GM12878 (cell line): ENCODE measurements at regions of chr19 and their contacts with region 1.

Region 1: DNA sequence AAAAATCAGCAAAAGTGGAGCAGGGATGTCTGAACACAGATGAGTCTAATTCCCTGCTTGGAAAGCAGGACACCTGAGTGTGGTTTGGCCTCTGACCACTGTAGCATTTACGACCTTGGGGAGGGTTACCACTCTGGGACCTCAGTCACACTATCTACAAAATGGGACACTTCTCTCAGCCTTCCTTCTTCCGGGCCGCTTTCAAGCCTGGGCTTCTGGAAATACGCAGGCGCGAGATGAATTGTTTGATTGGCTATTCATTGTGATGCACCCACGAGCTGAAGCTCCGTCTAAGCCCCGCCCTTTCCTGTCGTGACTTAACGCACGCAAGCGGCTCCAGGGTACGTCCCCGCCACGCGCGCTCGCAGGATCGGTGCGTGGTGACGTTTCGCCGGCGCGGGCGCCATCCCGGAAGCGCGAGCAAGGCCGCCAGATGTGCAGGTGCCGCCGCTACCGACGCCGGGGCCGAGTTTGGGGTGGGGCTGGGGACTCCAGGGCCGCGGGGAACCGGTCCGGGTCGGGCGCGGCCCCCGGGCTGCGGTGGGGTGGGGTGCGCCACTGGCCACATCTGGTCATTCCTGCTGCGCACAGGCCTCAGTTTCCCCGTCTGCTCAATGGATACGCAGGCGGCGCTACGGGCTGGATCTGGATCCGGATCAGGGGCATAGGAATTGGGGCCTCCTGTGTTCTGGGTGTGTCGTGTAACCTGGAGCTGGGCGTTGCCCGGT is at the start of gene KXD1:
- DNase-seq: peak; percentile 98
- ATAC-seq: peak; percentile 97
- H3K4me3 ChIP-seq: peak within 1 kb of the TSS; percentile 95
- H3K27ac ChIP-seq: peak within 1 kb of the TSS; percentile 85
- H3K4me1 ChIP-seq: no peaks in the 10 kb centered on the region
- H3K27me3 ChIP-seq: no peaks in the 10 kb centered on the region
- CTCF ChIP-seq: no peak
- EP300 ChIP-seq: no peak
- POLR2A ChIP-seq: peak; percentile 92
- RAD21 ChIP-seq: no peak
- polyA plus RNA-seq, gene KXD1: 27.5 to 44.9 TPM

Region 2: DNA sequence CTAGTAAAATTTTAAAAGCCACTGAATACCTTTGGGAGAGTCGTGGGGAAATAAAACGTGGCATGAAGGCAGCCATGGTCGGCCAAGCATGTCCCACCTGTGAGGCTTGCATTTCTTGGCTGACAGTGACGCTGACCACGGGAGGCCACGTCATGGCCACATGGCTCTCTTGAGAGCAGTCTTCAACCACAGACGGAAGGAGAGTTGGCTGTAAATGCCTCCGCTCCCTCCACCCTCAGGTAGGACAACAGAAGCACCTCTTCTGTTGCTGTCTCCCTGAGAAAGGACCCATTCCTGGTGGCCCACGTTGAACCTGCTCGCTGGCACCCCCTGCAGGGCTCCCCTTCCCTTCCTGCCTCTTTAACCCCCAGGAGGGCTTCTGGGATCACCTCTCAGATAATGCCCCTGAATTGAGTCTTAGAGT is 149.6 kb before region 1 on chr19:
- CTCF ChIA-PET with region 1: no interaction called
- POLR2A ChIA-PET with region 1: no interaction called
- RAD21 ChIA-PET with region 1: no interaction called
- SMC1A ChIA-PET with region 1: no interaction called
- in situ Hi-C with region 1: no loop called
- intact Hi-C with region 1: no loop called
- DNase-seq: peak; percentile 87
- ATAC-seq: peak; percentile 95
- H3K4me3 ChIP-seq: no peak overlapping the region
- H3K27ac ChIP-seq: peak overlapping the region; percentile 37
- H3K4me1 ChIP-seq: peaks cover 14% of the 10 kb centered on the region
- H3K27me3 ChIP-seq: no peaks in the 10 kb centered on the region
- CTCF ChIP-seq: peak; percentile 56 to 60 (median 59)
- EP300 ChIP-seq: peak; percentile 73 to 82; a peak in 3 of 4 replicates
- POLR2A ChIP-seq: peak; percentile 68
- RAD21 ChIP-seq: peak; percentile 60

Region 3: DNA sequence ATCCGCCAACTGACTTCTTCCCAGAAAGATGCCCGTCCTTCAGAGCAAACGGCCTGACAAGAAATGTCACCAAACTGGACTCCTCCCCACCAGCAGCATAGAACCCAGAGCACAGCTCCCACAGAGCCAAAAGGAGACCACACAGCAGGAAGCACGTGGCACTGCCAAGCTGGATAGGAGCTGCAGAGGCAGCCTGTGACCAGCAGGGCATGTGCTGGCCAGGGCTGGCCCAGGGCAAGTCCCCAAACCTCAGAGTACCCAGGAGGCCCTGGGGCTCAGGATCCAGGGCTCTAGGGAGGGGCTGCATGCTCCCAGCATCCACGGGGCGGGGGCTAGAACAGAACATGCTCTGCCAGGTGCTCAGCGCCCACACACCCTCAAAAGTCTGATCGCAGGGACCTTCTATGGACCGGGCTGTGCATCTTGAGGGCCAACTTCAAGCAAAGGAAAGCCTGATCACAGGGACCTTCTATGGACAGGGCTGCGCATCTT is 69.4 kb before region 1 on chr19:
- CTCF ChIA-PET with region 1: no interaction called
- POLR2A ChIA-PET with region 1: no interaction called
- RAD21 ChIA-PET with region 1: no interaction called
- SMC1A ChIA-PET with region 1: no interaction called
- in situ Hi-C with region 1: no loop called
- intact Hi-C with region 1: no loop called
- DNase-seq: no peak
- ATAC-seq: peak; percentile 46; the same call in 2 of the 3 replicates
- H3K4me3 ChIP-seq: no peak overlapping the region
- H3K27ac ChIP-seq: no peak overlapping the region
- H3K4me1 ChIP-seq: no peaks in the 10 kb centered on the region; the same call in 1 of the 2 replicates
- H3K27me3 ChIP-seq: no peaks in the 10 kb centered on the region
- CTCF ChIP-seq: no peak
- EP300 ChIP-seq: no peak
- POLR2A ChIP-seq: no peak
- RAD21 ChIP-seq: no peak

Region 4: DNA sequence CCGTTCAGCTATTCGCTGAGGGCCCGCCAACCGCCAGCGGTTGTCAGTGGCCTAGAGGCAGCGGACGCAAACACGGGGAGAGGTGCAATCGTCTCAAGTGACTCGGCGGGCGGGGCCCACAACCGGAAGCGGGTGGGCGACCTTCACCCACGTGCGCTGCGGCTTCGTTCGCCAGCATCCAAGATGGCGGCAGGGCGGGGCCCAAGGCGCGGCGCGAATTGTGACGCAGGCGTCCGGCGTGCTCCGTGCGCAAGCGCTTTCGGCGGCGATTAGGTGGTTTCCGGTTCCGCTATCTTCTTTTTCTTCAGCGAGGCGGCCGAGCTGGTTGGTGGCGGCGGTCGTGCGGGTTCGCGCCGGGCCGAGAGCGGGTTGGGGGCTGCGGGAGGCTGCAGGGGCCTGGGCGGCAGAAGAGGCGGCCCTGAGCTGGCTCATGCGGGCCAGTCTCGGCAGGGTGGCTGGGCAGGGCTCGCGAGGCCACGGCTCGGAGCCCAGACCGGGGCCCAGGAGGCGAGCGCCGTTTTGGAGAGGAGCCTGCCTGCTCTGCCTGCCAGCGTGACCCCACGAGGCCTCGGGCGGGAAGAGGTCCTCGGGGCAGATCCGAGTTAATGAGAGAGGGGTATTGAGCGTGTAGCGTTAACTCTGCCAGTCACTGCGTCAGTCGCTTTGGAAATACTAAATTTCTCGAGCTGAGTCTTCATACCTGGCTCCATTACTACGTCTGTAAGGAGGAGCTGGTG is 14.1 kb after region 1 on chr19 and contains the start of gene UBA52:
- CTCF ChIA-PET with region 1: interaction called, 5 read pairs
- POLR2A ChIA-PET with region 1: interaction called, 57 read pairs
- RAD21 ChIA-PET with region 1: interaction called, 29 read pairs
- SMC1A ChIA-PET with region 1: interaction called, 19 read pairs
- in situ Hi-C with region 1: no loop called
- intact Hi-C with region 1: no loop called
- DNase-seq: peak; percentile 92
- ATAC-seq: peak; percentile 98
- H3K4me3 ChIP-seq: peak within 1 kb of the TSS; percentile 95
- H3K27ac ChIP-seq: peak within 1 kb of the TSS; percentile 76
- H3K4me1 ChIP-seq: peaks cover 11% of the 10 kb centered on the region; the same call in 1 of the 2 replicates
- H3K27me3 ChIP-seq: no peaks in the 10 kb centered on the region
- CTCF ChIP-seq: no peak
- EP300 ChIP-seq: 0 out of 4 replicates have a peak, but pooled peaks of 1 of the 2 experiments have one; percentile 17
- POLR2A ChIP-seq: peak; percentile 99
- RAD21 ChIP-seq: no peak
- polyA plus RNA-seq, gene UBA52: 2,192 to 2,288 TPM

Region 5: DNA sequence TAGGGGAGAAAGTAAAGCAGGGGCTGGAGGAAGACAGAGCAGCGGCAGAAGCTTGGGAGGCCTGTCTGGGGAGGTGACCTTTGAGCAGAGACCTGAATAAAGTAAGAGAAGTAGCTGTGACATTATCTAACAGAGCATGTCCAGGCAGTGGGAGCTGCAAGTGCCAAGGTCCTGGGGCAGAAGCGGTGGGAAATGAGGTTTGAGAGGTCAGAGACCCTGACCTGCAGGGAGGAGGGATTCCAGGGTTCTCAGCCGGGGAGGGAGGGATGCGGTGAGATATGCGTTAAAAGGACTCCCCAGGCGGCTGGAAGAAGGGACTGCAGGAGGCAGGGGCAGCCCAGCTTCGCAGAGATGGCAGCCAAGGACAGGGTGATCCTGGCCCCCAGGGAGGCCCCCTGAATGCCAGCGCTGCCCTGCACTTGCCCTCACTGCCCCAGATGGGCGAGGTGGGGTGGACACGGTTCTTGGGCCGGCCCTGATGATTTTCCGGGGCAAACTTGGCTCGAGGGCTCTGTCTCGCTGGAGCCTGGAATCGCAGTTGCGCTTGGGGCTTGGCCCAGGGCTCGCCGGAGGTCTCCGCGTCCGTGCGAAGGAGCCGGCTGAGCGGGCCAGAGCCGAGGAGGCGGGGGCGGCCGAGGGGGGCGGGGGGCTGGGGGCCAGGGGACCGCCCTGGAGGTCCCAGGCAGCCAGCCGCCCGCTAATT is 45.8 kb after region 1 on chr19:
- CTCF ChIA-PET with region 1: no interaction called
- POLR2A ChIA-PET with region 1: no interaction called
- RAD21 ChIA-PET with region 1: no interaction called
- SMC1A ChIA-PET with region 1: no interaction called
- in situ Hi-C with region 1: no loop called
- intact Hi-C with region 1: no loop called
- DNase-seq: no peak
- ATAC-seq: peak; percentile 63
- H3K4me3 ChIP-seq: no peak overlapping the region
- H3K27ac ChIP-seq: no peak overlapping the region
- H3K4me1 ChIP-seq: no peaks in the 10 kb centered on the region
- H3K27me3 ChIP-seq: peaks cover 12 to 17% of the 10 kb centered on the region in 2 experiments
- CTCF ChIP-seq: peak in 2 of 3 experiments; percentile 21 to 30; a peak in 2 of 6 replicates
- EP300 ChIP-seq: no peak
- POLR2A ChIP-seq: no peak
- RAD21 ChIP-seq: peak; percentile 26; the same call in 1 of the 2 replicates

Region 6: GRCh38 chr19:18613589-18614234 is 56.1 kb after region 1 on chr19:
- CTCF ChIA-PET with region 1: no interaction called
- POLR2A ChIA-PET with region 1: no interaction called
- RAD21 ChIA-PET with region 1: no interaction called
- SMC1A ChIA-PET with region 1: no interaction called
- in situ Hi-C with region 1: no loop called
- intact Hi-C with region 1: no loop called
- DNase-seq: no peak
- ATAC-seq: no peak
- H3K4me3 ChIP-seq: no peak overlapping the region
- H3K27ac ChIP-seq: no peak overlapping the region
- H3K4me1 ChIP-seq: no peaks in the 10 kb centered on the region
- H3K27me3 ChIP-seq: peaks cover 15 to 25% of the 10 kb centered on the region in 2 experiments
- CTCF ChIP-seq: no peak
- EP300 ChIP-seq: no peak
- POLR2A ChIP-seq: no peak
- RAD21 ChIP-seq: no peak